Mammary epithelial cell (primary cell): ENCODE measurements at regions of chr19 and their contacts with region 1.

Region 1: GRCh38 chr19:31110331-31110730 is 238.9 kb downstream of the TSHZ3 start:
- DNase-seq: peak; percentile 27
- H3K4me3 ChIP-seq: no peak overlapping the region
- H3K27ac ChIP-seq: no peak overlapping the region
- H3K4me1 ChIP-seq: no peaks in the 10 kb centered on the region
- H3K27me3 ChIP-seq: no peaks in the 10 kb centered on the region
- CTCF ChIP-seq: peak; percentile 40 to 81

Region 2: DNA sequence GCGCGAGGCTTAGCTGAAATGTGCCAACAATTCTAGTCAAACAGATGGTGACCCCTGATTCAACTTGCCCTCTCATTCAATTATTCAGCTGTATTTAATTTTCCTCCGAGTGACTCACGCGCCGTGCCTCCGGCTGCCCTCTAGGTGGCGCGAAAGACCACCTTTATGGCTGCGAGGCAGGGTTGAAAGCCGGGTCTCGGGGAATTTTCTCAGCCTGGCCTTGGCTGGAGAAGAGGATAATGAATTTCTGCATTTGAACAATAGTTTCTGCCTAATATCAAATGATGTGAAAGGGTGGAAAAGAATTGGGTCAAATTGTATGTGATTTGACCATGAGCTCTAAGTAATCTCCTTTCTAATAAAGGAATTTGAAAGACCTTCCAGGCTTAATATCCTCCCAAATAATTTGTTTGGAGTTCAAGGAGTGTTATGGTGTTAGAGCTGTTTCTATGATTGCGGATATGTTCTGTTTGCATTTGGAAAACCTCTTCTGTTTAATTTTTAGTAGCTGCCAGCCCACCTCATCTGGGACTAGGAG is 427.3 kb before region 1 on chr19:
- CTCF ChIA-PET with region 1: no interaction called
- dilution Hi-C with region 1: no loop called
- in situ Hi-C with region 1: no loop called
- intact Hi-C with region 1: loop called (anchors 10 kb)
- DNase-seq: peak; percentile 68
- H3K4me3 ChIP-seq: no peak overlapping the region
- H3K27ac ChIP-seq: no peak overlapping the region
- H3K4me1 ChIP-seq: no peaks in the 10 kb centered on the region
- H3K27me3 ChIP-seq: no peaks in the 10 kb centered on the region
- CTCF ChIP-seq: peak; percentile 79 to 87

Region 3: DNA sequence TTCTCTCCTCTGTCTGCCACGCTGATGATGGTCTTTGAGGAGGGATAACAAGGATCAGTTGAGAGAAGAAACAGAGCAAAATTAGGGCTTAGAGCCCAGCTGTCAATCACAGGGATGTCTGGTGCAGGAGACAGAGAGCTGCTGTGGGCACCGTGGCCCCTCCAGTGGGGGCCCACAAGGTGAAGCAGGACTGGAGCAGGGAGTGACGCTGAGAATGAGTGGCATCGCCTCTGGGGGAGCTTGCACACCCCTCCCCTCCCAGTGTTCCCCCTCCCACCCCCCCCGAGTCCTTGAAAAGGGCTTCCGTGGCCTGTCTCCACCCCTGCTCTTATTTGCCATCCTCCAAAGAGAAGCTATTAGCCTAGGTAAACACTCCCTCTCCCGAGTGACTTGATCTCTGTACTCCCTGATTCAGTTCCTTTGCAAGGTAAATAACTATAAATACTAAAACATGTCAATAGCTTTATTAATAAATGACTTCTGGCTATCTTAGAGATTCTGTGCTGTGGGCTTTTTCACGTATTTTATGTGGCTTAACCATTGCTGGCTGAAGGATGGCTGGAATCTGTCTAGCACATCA is 298.1 kb before region 1 on chr19:
- CTCF ChIA-PET with region 1: no interaction called
- dilution Hi-C with region 1: no loop called
- in situ Hi-C with region 1: no loop called
- intact Hi-C with region 1: no loop called
- DNase-seq: no peak
- H3K4me3 ChIP-seq: no peak overlapping the region
- H3K27ac ChIP-seq: no peak overlapping the region
- H3K4me1 ChIP-seq: no peaks in the 10 kb centered on the region
- H3K27me3 ChIP-seq: no peaks in the 10 kb centered on the region
- CTCF ChIP-seq: no peak

Region 4: GRCh38 chr19:31232181-31232580 is 121.8 kb after region 1 on chr19:
- CTCF ChIA-PET with region 1: no interaction called
- dilution Hi-C with region 1: no loop called
- in situ Hi-C with region 1: no loop called
- intact Hi-C with region 1: loop called (anchors 1 kb)
- DNase-seq: no peak
- H3K4me3 ChIP-seq: no peak overlapping the region
- H3K27ac ChIP-seq: no peak overlapping the region
- H3K4me1 ChIP-seq: no peaks in the 10 kb centered on the region
- H3K27me3 ChIP-seq: no peaks in the 10 kb centered on the region
- CTCF ChIP-seq: peak in 1 of 2 donors; percentile 34

Region 5: DNA sequence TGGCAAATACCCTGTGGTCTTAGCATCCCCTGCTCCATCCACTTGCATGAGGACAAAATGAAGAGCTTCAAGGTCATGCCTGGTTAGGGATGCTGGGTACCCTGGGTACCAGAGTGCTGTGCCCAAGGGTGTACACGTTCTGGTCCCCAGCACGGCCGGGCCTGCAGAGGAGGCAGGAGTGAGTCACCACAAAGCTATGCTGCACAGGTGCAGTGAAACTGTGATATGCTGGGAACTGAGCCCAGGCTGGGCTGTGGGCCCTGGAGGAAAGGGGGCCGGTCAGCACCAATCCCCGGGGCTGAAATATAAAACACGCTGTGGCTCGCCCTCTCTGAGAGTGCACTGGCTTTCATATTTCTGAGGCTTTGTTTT is 143.8 kb after region 1 on chr19:
- CTCF ChIA-PET with region 1: no interaction called
- dilution Hi-C with region 1: no loop called
- in situ Hi-C with region 1: no loop called
- intact Hi-C with region 1: loop called (anchors 5 kb)
- DNase-seq: peak; percentile 86
- H3K4me3 ChIP-seq: no peak overlapping the region
- H3K27ac ChIP-seq: no peak overlapping the region
- H3K4me1 ChIP-seq: peaks cover 17% of the 10 kb centered on the region
- H3K27me3 ChIP-seq: no peaks in the 10 kb centered on the region
- CTCF ChIP-seq: no peak

Region 6: DNA sequence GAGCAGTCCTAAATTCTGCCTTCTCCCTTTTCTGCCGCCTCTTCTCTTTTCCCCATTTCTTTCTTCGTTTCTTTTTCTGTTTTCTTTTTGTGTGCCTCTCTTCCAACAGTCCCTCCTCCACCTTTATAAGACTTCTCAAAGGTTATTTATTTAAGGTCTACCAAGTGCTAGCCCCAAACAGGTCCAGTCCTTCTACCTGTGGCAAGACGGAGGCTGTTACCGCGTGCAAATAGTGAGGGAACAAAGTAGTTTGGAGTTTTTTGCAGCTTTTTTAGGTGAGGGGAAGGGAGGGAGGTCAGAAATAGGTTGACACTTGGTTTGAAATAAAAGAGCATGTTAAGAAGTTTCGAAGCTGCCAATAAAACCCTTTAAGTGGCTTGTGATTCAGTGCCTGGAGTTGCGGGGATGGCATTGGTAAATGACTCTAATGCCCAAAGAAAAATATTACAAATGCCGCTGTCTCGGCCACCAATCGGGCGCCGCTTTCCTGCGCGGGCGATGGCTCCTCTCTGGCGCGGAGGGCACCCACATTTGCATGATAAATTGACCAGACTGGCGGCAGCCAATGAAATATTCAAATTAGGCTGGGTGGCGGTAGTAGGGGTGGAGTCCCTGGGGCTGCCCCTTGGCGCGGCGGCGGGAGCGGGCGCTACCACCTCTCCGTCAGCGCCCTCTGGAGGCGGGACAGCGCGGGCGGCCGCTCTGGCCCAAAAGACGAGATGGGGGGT is 246.4 kb after region 1 on chr19:
- CTCF ChIA-PET with region 1: no interaction called
- dilution Hi-C with region 1: no loop called
- in situ Hi-C with region 1: no loop called
- intact Hi-C with region 1: loop called (anchors 1 kb)
- DNase-seq: no peak
- H3K4me3 ChIP-seq: no peak overlapping the region
- H3K27ac ChIP-seq: no peak overlapping the region
- H3K4me1 ChIP-seq: peaks cover 3% of the 10 kb centered on the region
- H3K27me3 ChIP-seq: no peaks in the 10 kb centered on the region
- CTCF ChIP-seq: peak; percentile 17 to 55

Region 7: DNA sequence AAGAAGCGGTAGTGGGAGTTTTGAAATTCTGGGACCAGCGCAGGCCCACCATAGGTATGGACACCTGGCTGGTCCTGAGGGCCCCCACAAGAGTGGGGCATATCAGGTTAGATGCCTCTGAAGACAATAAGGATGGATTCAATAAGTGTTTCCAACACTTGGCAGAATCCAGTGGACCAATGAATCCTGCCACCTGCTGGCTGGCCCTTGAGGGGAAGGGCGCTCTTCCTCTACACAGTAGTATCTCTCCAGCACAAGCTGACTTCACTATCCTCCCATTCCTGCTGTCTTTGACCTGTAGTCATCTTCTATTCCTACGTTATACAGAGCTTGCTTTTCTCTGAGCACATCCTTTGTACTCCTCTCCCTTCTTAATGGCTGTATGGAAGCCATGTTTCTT is 438.6 kb after region 1 on chr19:
- CTCF ChIA-PET with region 1: no interaction called
- dilution Hi-C with region 1: no loop called
- in situ Hi-C with region 1: no loop called
- intact Hi-C with region 1: loop called (anchors 1 kb)
- DNase-seq: peak; percentile 6
- H3K4me3 ChIP-seq: no peak overlapping the region
- H3K27ac ChIP-seq: no peak overlapping the region
- H3K4me1 ChIP-seq: no peaks in the 10 kb centered on the region
- H3K27me3 ChIP-seq: no peaks in the 10 kb centered on the region
- CTCF ChIP-seq: peak; percentile 12 to 73